PC-9 (cell line): ENCODE measurements at regions of chr1 and their contacts with region 1.

Region 1: GRCh38 chr1:212315907-212316306 is 30.7 kb downstream of the PPP2R5A start:
- DNase-seq: peak in 1 of 2 experiments; percentile 17
- H3K4me3 ChIP-seq: no peak overlapping the region
- H3K27ac ChIP-seq: no peak overlapping the region
- H3K4me1 ChIP-seq: no peaks in the 10 kb centered on the region
- H3K27me3 ChIP-seq: no peaks in the 10 kb centered on the region
- CTCF ChIP-seq: peak; percentile 49

Region 2: DNA sequence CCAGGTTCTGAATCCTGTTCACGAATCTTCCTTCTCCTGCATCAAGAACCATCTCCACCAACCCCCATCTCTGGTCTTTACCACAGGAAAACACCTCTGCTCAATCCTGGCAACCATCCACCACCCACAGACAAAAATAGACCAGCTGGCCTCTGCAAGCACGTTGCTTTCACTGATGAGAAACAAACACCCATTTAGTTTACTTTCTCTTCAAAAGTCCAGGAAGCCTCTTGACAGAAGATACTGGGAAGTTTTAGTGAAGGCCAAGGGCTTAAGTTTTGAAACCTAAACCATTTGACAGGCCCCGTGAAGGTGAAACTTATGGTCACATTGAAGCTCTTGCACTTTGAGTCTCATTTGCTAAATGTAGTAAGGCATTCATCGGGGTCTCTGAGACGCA is 153.3 kb before region 1 on chr1:
- CTCF ChIA-PET with region 1: interaction called, 11 read pairs
- POLR2A ChIA-PET with region 1: no interaction called
- intact Hi-C with region 1: no loop called
- DNase-seq: no peak
- H3K4me3 ChIP-seq: no peak overlapping the region
- H3K27ac ChIP-seq: no peak overlapping the region
- H3K4me1 ChIP-seq: no peaks in the 10 kb centered on the region; the same call in 1 of the 2 replicates
- H3K27me3 ChIP-seq: no peaks in the 10 kb centered on the region
- CTCF ChIP-seq: no peak

Region 3: DNA sequence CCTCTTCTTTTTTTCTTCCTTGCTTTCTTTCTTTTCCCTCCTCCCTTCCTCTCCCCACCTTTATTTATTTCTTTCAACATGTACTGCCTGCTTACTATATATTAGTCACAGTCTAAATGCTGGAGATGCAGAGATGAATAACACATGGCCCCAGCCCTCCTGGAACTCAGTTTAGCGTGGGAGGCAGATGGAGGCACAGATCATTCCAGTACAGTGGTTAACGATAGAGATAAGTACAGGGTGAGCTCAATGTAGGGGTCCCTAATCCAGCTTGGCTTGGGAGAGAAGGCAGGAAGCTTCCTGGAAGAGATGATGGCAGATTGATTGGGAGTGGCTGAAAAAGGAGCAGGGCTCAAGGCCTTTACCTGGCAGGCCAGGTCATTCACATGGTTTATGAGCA is 86.3 kb before region 1 on chr1:
- CTCF ChIA-PET with region 1: no interaction called
- POLR2A ChIA-PET with region 1: no interaction called
- intact Hi-C with region 1: no loop called
- DNase-seq: no peak
- H3K4me3 ChIP-seq: no peak overlapping the region
- H3K27ac ChIP-seq: no peak overlapping the region
- H3K4me1 ChIP-seq: peaks cover 7% of the 10 kb centered on the region
- H3K27me3 ChIP-seq: no peaks in the 10 kb centered on the region
- CTCF ChIP-seq: no peak